CD8-positive, alpha-beta T cell (primary cell): ENCODE measurements at regions of chr1 and their contacts with region 1.

Region 1: DNA sequence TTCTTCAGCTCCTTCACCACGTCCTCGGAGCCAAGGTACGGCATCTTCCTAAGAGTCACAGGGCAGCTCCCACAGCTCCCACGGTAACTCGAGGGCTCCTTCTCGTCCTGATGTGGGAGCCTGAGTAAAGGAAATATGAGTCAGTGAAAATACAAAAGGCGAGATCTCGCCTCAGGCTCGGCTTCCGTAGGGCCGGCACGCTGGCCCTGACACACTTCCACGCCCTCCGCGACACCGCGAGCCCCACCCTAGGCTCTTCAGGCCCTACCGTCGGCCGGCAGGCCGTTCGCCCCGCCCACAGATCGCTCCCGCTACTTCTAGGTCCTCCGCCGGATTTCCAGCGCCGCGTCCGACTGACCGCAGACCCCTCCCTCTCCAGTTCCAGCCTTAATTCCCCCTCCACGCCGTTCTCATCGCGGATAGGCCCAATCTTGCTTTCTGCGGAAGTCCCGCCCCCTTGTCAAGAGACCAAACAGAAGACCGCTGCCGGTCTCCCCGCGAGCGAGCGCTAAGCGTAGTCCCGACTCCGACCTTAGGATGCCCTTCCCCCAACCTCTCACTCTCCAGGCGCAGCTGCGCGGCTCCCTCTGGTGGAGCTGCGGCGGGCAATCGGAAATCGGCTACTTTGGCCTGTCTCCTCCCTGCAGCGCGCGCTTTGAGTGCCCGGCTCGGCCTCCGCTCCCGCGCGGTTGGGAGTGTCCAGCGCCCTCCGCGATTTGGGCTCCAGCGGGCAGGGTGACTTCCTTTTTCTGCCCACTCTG is at the starts of genes AP4B1 and DCLRE1B:
- DNase-seq: peak; percentile 93 to 100 (median 95)
- ATAC-seq: peak; percentile 92
- H3K4me3 ChIP-seq: peak within 1 kb of the TSS; percentile 83 to 85
- H3K4me3 Mint-ChIP-seq: peak within 1 kb of the TSS; percentile 99
- H3K27ac ChIP-seq: peak within 1 kb of the TSS; percentile 92 to 96
- H3K27ac Mint-ChIP-seq: peak within 1 kb of the TSS; percentile 100
- H3K4me1 ChIP-seq: peaks cover 34% of the 10 kb centered on the region
- H3K4me1 Mint-ChIP-seq: peaks cover 62% of the 10 kb centered on the region
- H3K27me3 ChIP-seq: no peaks in the 10 kb centered on the region
- H3K27me3 Mint-ChIP-seq: no peaks in the 10 kb centered on the region
- CTCF ChIP-seq: peak; percentile 65
- total RNA-seq, gene AP4B1: 63.7 to 67.3 TPM
- total RNA-seq, gene DCLRE1B: 8.1 to 9.1 TPM

Region 2: GRCh38 chr1:113759333-113760101 is 145.3 kb before region 1 on chr1 and contains the start of gene PHTF1:
- CTCF ChIA-PET with region 1: interaction called, 3 read pairs
- POLR2A ChIA-PET with region 1: no interaction called
- intact Hi-C with region 1: loop called in 1 of 2 experiments (anchors 10 kb)
- DNase-seq: peak; percentile 3 to 77 (median 59)
- ATAC-seq: peak; percentile 73
- H3K4me3 ChIP-seq: peak within 1 kb of the TSS; percentile 84 to 94
- H3K4me3 Mint-ChIP-seq: peak within 1 kb of the TSS; percentile 90
- H3K27ac ChIP-seq: peak within 1 kb of the TSS; percentile 73 to 89
- H3K27ac Mint-ChIP-seq: peak within 1 kb of the TSS; percentile 96
- H3K4me1 ChIP-seq: peaks cover 4% of the 10 kb centered on the region
- H3K4me1 Mint-ChIP-seq: peaks cover 25% of the 10 kb centered on the region
- H3K27me3 ChIP-seq: no peaks in the 10 kb centered on the region
- H3K27me3 Mint-ChIP-seq: no peaks in the 10 kb centered on the region
- CTCF ChIP-seq: no peak
- total RNA-seq, gene PHTF1: 4.4 to 5.4 TPM

Region 3: DNA sequence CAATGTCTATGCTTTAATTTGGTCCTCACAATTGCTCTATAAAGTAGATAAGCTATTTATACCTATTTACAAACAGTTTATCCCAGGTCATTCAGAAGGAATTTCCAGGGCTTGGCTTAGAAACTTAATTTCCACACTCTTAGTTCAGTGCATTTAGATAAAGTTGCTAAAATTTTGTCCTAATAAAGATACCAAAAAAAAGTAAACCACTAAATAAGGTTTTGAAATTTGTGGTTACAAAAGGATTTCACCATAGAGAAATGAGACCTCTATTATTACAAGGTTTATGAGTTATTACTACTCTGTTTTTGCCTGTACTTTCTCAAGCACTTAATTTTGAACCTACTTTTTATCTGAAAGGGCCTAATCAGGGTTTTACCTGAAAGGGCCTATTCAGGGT is 55.8 kb before region 1 on chr1:
- CTCF ChIA-PET with region 1: no interaction called
- POLR2A ChIA-PET with region 1: interaction called, 14 read pairs
- intact Hi-C with region 1: no loop called
- DNase-seq: no peak
- ATAC-seq: no peak
- H3K4me3 ChIP-seq: no peak overlapping the region
- H3K4me3 Mint-ChIP-seq: no peak overlapping the region
- H3K27ac ChIP-seq: no peak overlapping the region
- H3K27ac Mint-ChIP-seq: no peak overlapping the region
- H3K4me1 ChIP-seq: peaks cover 13% of the 10 kb centered on the region
- H3K4me1 Mint-ChIP-seq: peaks cover 11% of the 10 kb centered on the region
- H3K27me3 ChIP-seq: no peaks in the 10 kb centered on the region
- H3K27me3 Mint-ChIP-seq: no peaks in the 10 kb centered on the region
- CTCF ChIP-seq: no peak

Region 4: GRCh38 chr1:113949007-113949406 is 44.2 kb after region 1 on chr1:
- CTCF ChIA-PET with region 1: interaction called, 10 read pairs
- POLR2A ChIA-PET with region 1: interaction called, 17 read pairs
- intact Hi-C with region 1: no loop called
- DNase-seq: peak in 2 of 9 experiments; percentile 48 to 59
- ATAC-seq: no peak
- H3K4me3 ChIP-seq: no peak overlapping the region
- H3K4me3 Mint-ChIP-seq: peak overlapping the region; percentile 6
- H3K27ac ChIP-seq: peak overlapping the region; percentile 31 to 65
- H3K27ac Mint-ChIP-seq: peak overlapping the region; percentile 93
- H3K4me1 ChIP-seq: peaks cover 81% of the 10 kb centered on the region
- H3K4me1 Mint-ChIP-seq: peaks cover 82% of the 10 kb centered on the region
- H3K27me3 ChIP-seq: no peaks in the 10 kb centered on the region
- H3K27me3 Mint-ChIP-seq: no peaks in the 10 kb centered on the region
- CTCF ChIP-seq: peak; percentile 68

Region 5: DNA sequence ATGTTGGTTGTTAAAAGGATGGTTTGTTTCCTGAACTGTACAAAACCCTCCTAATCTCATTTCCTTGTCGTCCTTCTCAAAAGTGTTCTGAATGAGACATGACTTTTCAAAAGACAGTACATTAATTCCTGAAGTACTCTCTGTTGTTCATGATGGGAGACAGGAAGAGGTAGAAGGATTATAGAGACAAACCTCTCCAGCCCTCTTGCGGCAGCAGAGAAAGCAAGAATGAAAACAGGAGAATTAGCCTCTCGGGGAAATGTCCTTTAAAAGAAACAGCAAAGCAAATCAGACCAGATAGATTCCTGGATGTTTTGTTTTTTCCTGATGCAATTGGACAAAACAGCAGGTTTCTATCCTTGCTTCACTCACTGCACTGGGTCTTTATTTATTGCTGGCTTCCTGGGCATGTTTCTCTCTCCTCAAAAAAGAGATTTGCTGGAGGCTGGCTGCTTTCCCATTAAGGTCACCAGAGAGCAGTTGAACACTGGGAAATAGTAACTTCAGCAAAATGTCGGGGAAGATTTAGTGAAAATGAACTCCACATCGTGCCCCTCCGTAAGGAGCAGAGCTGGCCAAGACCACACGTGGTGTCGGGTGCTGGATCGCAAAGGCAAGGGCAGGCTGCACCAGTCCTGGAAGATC is 394.6 kb after region 1 on chr1:
- CTCF ChIA-PET with region 1: no interaction called
- POLR2A ChIA-PET with region 1: no interaction called
- intact Hi-C with region 1: no loop called
- DNase-seq: no peak
- ATAC-seq: no peak
- H3K4me3 ChIP-seq: no peak overlapping the region
- H3K4me3 Mint-ChIP-seq: no peak overlapping the region
- H3K27ac ChIP-seq: no peak overlapping the region
- H3K27ac Mint-ChIP-seq: no peak overlapping the region
- H3K4me1 ChIP-seq: no peaks in the 10 kb centered on the region
- H3K4me1 Mint-ChIP-seq: peaks cover 9% of the 10 kb centered on the region
- H3K27me3 ChIP-seq: no peaks in the 10 kb centered on the region
- H3K27me3 Mint-ChIP-seq: no peaks in the 10 kb centered on the region
- CTCF ChIP-seq: no peak

Region 6: DNA sequence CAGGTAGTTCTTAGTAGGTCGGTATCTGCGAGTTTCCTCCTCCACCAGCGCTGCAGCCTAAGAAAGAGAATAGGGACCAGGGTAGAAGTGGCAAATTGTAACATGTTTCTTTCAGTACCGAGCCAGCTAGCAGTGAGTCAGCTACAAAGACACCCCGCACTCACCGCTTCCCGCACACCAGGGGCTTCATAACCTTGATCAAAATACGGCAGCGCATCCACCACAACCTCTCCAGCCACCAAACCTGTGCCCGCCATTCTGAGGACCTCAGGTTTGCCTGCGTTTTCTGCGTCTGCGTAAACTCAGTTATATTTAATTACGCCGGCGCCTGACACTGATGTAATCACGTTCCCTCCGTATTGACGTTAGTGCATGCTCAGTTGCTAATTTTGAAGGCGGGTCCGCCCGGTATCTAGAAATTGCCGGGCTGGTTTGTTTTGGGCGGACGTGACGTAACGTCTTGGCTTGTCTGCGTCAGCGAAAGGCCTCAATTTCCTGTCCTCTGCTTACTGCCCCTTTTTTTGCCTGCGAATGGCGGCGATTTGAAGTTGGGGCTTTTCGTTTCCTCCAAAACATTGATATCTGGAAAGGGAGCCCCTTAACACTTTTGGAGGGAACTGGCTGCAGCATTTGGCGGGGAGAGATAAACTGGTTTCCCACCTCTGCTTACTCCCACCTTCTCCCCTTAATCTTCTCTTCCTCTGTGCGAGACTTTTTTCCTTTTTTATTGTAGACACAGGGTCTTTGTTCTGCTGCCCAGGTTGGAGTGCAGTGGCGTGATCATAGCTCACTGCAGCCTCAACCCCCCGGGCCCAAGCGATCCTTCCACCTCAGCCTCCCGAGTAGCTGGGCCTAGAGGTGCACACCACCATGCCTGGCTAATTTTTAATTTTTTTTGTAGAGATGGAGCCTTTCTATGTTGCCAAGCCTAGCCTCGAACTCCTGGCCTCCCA is 676.8 kb after region 1 on chr1 and contains the start of gene BCAS2:
- CTCF ChIA-PET with region 1: no interaction called
- POLR2A ChIA-PET with region 1: no interaction called
- intact Hi-C with region 1: loop called in 1 of 2 experiments (anchors 10 kb)
- DNase-seq: peak; percentile 90 to 99 (median 95)
- ATAC-seq: peak; percentile 95
- H3K4me3 ChIP-seq: peak within 1 kb of the TSS; percentile 56 to 72
- H3K4me3 Mint-ChIP-seq: peak within 1 kb of the TSS; percentile 96
- H3K27ac ChIP-seq: peak within 1 kb of the TSS; percentile 84 to 94
- H3K27ac Mint-ChIP-seq: peak within 1 kb of the TSS; percentile 99
- H3K4me1 ChIP-seq: peaks cover 22% of the 10 kb centered on the region
- H3K4me1 Mint-ChIP-seq: peaks cover 46% of the 10 kb centered on the region
- H3K27me3 ChIP-seq: no peaks in the 10 kb centered on the region
- H3K27me3 Mint-ChIP-seq: no peaks in the 10 kb centered on the region
- CTCF ChIP-seq: no peak
- total RNA-seq, gene BCAS2: 113 to 125 TPM

Region 7: GRCh38 chr1:115144181-115144580 is 1239.3 kb after region 1 on chr1:
- CTCF ChIA-PET with region 1: no interaction called
- POLR2A ChIA-PET with region 1: no interaction called
- intact Hi-C with region 1: no loop called
- DNase-seq: no peak
- ATAC-seq: no peak
- H3K4me3 ChIP-seq: no peak overlapping the region
- H3K4me3 Mint-ChIP-seq: no peak overlapping the region
- H3K27ac ChIP-seq: no peak overlapping the region
- H3K27ac Mint-ChIP-seq: no peak overlapping the region
- H3K4me1 ChIP-seq: no peaks in the 10 kb centered on the region
- H3K4me1 Mint-ChIP-seq: peaks cover 5% of the 10 kb centered on the region
- H3K27me3 ChIP-seq: no peaks in the 10 kb centered on the region
- H3K27me3 Mint-ChIP-seq: peaks cover 25% of the 10 kb centered on the region
- CTCF ChIP-seq: no peak